Astrocyte of the cerebellum (primary cell): ENCODE measurements at regions of chr10 and their contacts with region 1.

Region 1: GRCh38 chr10:3248888-3249758 is 76.5 kb upstream of the PITRM1 start:
- DNase-seq: peak; percentile 80
- H3K4me3 ChIP-seq: no peak overlapping the region
- CTCF ChIP-seq: no peak

Region 2: DNA sequence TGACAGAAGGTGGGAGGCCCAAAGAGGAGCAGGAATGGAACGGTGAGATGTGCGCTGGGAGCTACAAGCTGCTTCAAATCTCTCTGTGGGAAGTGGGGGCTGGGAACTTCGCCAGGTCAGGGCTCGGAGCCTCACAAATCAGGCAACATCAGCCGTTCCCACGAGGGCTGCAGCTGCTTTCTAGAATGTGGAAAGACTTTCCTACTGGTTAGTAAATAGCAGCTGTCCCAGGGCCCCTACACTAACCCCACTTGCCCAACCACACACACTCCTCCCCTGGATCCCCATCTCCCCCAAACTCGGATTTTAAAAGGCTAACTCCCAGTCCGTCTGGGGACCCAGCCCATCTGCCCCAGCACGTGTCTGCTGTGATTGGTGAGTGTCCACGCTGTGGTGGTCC is 35.9 kb before region 1 on chr10:
- in situ Hi-C with region 1: loop called (anchors 5 kb)
- DNase-seq: no peak
- H3K4me3 ChIP-seq: no peak overlapping the region
- CTCF ChIP-seq: no peak

Region 3: DNA sequence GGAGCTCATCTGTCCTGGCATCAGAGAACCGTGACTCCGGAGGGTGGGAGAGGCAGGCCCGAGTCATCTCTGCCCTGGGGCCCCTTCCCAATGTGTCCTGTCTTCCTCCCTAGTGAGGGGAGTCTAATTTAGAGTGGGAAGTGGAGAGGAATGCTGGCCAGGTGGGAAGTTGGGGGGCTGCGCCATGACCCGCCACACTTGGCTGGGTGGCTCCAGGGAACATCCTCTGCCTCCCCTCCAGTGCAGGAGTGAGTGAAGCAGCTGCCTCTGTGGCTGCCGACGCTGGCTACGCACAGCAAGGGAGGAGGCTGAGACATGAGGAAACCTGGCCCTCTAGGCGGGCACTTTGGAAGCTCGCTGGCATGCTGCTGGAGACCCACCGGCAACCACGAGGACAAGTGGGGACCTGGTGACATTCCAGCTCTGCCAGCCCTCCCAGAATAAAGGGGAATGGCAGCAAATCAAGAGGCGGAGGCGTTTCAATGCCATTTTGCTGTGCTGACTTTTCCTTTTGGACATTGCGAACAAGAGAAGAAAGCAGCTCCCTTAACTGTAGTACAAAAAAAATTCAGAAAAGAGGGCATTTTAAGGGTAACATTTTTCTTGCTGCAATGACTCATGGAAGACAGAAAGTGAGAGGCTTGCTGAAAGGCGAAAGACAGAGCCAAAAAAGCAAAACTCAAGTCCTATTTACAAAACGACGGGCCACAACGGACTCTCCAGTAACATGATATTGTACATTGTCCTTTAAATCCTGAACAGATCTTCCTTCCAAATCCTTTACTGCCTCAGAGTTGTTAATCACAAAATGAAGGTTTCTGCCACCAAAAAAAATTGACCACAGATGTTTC is 44.7 kb after region 1 on chr10:
- in situ Hi-C with region 1: no loop called
- DNase-seq: no peak
- H3K4me3 ChIP-seq: no peak overlapping the region
- CTCF ChIP-seq: no peak

Region 4: DNA sequence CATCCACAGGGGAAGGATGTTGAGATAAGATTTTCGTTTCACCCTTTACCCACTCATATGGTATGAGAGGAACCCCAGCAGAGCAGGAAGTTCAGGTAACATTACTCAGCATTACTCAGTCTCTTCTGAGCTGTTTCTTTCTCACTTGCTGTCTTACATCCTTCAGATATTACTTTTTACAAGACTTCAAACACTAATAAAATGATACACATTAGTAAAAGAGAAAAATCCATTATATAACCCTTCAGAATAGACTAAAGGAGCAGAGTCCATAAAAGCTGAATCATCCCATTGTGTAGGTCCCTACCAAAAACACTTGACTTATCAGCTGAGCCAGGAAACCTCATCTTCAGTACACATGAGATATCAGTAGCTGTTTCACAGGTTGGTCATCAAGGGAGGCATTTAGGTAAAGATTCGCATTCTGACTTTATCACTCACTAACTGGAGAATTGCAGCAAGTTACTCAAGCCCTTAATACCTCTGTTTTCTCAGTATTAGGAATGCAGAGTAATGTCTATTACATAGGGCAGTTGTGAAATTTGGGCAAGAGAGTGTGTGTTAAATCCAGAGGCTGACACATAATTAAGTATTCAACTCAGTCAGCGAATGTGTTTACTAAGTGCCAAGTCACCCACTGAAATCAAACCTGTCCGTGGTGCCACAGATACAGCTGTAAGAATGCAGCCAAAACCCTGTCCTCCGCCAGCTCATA is 491.2 kb after region 1 on chr10:
- in situ Hi-C with region 1: loop called (anchors 10 kb)
- DNase-seq: no peak
- H3K4me3 ChIP-seq: no peak overlapping the region
- CTCF ChIP-seq: no peak

Region 5: DNA sequence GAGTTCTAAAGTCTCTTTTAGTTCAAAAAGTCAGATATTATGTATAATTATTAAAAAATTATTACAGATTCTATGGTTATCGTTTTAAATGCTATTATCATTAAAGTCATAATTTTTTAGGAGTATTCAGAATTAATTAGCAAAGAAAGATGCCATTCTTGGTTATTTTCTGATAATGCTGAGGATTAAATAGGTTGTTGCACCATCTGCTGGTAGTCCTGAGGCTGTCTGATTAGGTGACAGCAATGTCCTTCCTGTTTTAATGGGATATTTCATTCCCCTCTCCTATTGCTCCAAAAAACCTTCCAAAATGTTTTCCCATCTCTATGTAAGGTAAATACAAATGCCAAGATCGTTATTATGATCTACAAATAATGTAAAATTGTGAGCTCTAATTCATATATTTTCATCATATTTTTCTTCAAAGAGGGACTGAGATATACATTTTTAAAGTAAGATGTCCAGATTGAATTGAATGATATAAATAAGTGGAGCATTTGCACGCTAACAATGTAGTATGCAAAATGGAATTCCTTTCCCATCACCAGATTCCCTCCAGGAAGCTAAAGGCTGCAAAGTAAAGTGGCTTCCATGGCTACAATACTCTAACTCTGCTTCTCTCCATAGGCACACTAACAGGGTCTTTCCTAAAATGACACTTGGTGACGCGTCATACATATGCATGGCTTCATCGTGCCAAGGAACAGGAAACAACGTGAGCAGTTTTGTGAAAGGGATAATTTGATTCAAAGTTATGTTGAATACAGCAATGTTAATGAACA is 1518.1 kb after region 1 on chr10:
- in situ Hi-C with region 1: loop called (anchors 10 kb)
- DNase-seq: peak; percentile 54
- H3K4me3 ChIP-seq: no peak overlapping the region
- CTCF ChIP-seq: peak; percentile 70